Dorsolateral prefrontal cortex (tissue), 120 donors: ENCODE measurements at regions of chr12 and their contacts with region 1.

Region 1: GRCh38 chr12:1795785-1796514 is 24.4 kb upstream of the LRTM2 start:
- DNase-seq: peak; percentile 81 to 95 (median 88)
- H3K4me3 ChIP-seq: peak overlapping the region; percentile 42 to 84 (median 61)
- H3K27ac ChIP-seq: peak overlapping the region; percentile 17 to 91 (median 77)
- H3K27me3 ChIP-seq: no peaks in the 10 kb centered on the region
- CTCF ChIP-seq: peak; percentile 95 to 100 (median 99)

Region 2: DNA sequence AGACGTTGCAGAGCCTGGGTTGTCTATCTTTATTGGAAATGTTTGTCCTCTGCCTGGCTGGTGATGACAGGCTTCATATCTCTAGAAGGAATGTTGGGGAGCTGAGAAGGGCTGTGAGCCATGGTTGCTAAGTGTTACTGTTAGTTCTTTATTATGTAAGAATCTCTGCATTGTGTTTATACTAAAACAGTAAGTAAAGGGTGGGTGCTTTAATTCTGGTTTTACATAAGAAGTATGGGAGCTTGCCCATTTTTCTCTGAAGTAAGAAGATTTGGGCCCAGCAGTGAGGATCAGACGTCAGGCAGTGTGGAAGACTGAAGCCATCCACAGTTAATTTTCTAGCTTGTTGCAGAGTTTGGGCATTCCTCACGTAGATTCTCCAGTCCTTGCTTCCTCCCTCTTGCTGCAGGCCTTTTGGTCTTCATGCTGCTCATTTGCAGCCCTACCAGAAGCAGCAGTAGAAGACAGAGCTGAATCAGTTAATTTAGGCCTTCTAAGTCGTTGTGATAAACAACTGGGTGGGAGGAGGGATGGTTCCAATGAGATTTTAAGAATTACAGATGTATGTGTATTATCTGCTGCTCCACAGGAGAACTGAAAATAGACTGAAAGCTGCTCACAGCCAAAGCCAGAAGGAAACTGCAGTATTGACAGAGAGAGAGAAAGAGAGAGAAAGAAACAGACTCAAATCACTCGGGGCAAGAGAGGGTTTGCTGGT is 145.5 kb before region 1 on chr12:
- intact Hi-C with region 1: loop called (anchors 2 kb)
- DNase-seq: peak in 1 of 10 donors; percentile 48
- H3K4me3 ChIP-seq: no peak overlapping the region
- H3K27ac ChIP-seq: peak overlapping the region; percentile 13 to 100 (median 83)
- H3K27me3 ChIP-seq: no peaks in the 10 kb centered on the region
- CTCF ChIP-seq: no peak

Region 3: DNA sequence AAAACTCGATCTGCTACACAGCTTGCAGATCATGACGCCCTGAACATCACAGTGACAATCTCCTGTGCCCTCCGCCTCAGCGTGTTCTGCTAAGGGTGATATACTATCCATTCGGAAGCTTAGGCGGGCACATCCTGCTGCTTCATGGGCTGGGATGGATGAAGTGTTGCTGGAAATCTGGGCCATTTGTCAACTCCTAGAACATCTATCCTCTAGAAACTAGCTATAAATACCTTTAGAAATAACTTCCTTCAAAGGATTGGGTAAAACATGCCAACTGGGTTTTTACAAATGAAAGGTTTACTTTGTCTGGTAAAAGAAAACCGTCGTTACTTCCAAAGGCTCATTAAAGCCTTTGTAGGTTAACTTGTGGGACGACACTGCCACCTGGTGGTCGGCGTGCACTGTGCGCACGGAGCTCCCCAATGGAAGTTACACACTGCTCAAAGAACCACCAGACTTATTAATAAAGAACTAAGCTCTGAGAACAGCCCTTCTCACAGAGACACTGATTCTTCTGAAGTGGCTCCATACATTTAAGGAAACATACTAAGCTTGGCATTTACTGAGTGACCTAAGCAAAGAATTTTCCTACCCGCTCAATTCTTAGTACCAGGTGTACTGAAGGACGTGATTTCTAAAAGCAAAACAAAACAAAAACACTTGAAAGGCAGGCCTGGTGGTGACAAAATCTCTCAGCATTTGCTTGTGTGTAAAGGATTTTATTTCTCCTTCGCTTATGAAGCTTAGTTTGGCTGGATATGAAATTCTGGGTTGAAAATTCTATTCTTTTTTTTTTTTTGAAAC is 144.1 kb after region 1 on chr12:
- intact Hi-C with region 1: loop called (anchors 1 kb)
- DNase-seq: peak; percentile 83 to 97 (median 89)
- H3K4me3 ChIP-seq: peak overlapping the region in 31 of 59 donors; percentile 2 to 46 (median 18)
- H3K27ac ChIP-seq: peak overlapping the region; percentile 14 to 100 (median 83)
- H3K27me3 ChIP-seq: no peaks in the 10 kb centered on the region
- CTCF ChIP-seq: peak; percentile 94 to 100 (median 99)

Region 4: DNA sequence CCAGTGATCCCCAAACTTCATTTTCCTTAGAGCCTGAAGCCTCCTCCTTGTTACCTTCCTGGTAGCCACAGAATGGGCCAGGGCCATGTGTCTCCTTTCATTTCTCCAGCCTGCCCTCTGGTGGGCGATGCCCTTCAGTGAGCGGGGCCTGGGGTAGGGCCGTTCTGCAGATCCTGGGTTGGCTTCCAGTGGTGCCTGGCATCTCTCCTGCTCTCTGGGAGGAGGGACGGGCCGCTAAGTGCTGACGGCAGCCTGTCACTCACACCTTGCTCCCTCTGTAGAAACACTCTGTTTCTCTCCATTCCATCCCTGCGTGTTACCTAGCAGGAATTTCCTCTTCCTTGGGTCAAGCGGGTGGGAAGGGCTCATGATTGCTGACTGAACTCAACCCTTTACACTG is 488.9 kb after region 1 on chr12:
- intact Hi-C with region 1: loop called in 1 of 2 experiments (anchors 10 kb)
- DNase-seq: peak in 8 of 10 donors; percentile 41 to 74 (median 62)
- H3K4me3 ChIP-seq: no peak overlapping the region
- H3K27ac ChIP-seq: peak overlapping the region in 3 of 59 donors; percentile 8 to 28 (median 22)
- H3K27me3 ChIP-seq: no peaks in the 10 kb centered on the region
- CTCF ChIP-seq: peak in 54 of 56 donors; percentile 35 to 72 (median 62)